Activated CD8-positive, alpha-beta memory T cell treated with anti-CD3 and anti-CD28 coated beads, Interleukin-2, amount 10 ng/mL, durations not matched to agents 7 days and 5 days (primary cell): ENCODE measurements at regions of chr4 and their contacts with region 1.

Region 1: GRCh38 chr4:26325191-26325590 is 4.4 kb downstream of the RBPJ start:
- DNase-seq: peak; percentile 53
- ATAC-seq: peak; percentile 32
- H3K4me3 Mint-ChIP-seq: peak overlapping the region; percentile 20
- H3K27ac Mint-ChIP-seq: peak overlapping the region; percentile 53
- H3K4me1 Mint-ChIP-seq: peaks cover 48% of the 10 kb centered on the region
- H3K27me3 Mint-ChIP-seq: no peaks in the 10 kb centered on the region

Region 2: DNA sequence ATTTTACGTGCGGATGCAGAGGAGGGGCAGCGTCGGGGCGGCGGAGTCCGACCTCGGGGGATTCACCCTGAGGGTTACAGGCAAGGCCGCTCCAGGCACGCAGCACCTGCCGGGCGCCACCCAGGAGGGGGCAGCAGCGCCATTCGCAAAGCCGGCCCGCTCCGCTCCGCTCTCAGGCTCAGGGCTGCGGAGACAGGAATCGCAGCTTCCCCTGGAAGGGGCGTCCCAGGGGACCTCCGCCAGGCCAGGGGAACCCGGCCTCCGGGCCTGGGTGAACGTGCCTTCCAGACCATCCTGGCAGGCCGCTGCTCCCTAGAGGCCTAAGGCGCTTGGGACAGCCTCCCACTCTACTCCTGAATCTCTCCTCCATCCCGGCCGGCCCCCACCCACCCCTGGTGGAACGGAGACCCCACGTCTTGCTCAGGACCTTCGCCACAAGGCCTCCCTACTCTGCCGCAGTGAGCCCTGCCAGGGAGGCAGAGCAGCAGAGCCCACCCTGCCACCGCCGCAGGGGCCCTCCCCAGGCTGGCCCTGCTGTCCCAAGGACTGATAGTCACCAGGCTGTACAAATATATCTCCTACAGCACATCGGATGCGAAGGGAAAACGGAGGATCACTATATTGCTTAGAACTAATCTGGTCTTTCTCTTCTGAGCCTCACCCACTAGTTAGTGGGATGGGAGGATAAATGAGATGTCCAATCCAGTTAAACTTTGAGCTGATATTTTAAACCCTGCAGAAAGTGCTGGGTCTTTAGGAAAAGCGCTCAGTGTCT is 296.2 kb before region 1 on chr4:
- CTCF ChIA-PET with region 1: interaction called, 20 read pairs
- DNase-seq: peak; percentile 79
- ATAC-seq: peak; percentile 97
- H3K4me3 Mint-ChIP-seq: no peak overlapping the region
- H3K27ac Mint-ChIP-seq: no peak overlapping the region
- H3K4me1 Mint-ChIP-seq: peaks cover 13% of the 10 kb centered on the region
- H3K27me3 Mint-ChIP-seq: peaks cover 2% of the 10 kb centered on the region

Region 3: DNA sequence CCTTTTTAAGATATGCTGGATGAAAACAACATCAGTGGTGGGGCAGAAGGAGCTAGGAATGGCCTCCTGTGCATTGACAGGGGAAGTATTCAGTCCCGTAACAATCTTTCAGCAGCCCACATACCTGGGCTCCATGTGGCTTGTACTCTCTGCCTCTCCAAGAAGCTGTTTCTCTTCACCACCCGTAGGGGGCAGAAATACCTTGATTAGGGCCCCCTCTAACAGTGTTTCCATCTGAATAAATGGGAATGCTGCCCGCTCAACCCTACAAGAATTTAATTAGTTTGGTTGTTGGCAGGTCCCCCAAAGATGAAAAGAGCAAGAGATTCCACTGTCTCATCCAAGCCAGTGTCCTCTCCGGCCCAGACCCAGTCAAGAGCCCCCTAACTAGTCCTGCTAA is 256.0 kb before region 1 on chr4:
- CTCF ChIA-PET with region 1: interaction called, 13 read pairs
- DNase-seq: no peak
- ATAC-seq: peak; percentile 54
- H3K4me3 Mint-ChIP-seq: no peak overlapping the region
- H3K27ac Mint-ChIP-seq: no peak overlapping the region
- H3K4me1 Mint-ChIP-seq: peaks cover 10% of the 10 kb centered on the region
- H3K27me3 Mint-ChIP-seq: peaks cover 7% of the 10 kb centered on the region

Region 4: GRCh38 chr4:26081795-26082498 is 243.2 kb before region 1 on chr4:
- CTCF ChIA-PET with region 1: interaction called, 11 read pairs
- DNase-seq: no peak
- ATAC-seq: peak; percentile 64
- H3K4me3 Mint-ChIP-seq: no peak overlapping the region
- H3K27ac Mint-ChIP-seq: peak overlapping the region; percentile 61
- H3K4me1 Mint-ChIP-seq: peaks cover 70% of the 10 kb centered on the region
- H3K27me3 Mint-ChIP-seq: no peaks in the 10 kb centered on the region

Region 5: GRCh38 chr4:26308568-26308967 is 16.6 kb before region 1 on chr4:
- CTCF ChIA-PET with region 1: interaction called, 13 read pairs
- DNase-seq: no peak
- ATAC-seq: peak; percentile 80
- H3K4me3 Mint-ChIP-seq: no peak overlapping the region
- H3K27ac Mint-ChIP-seq: peak overlapping the region; percentile 68
- H3K4me1 Mint-ChIP-seq: peaks cover 37% of the 10 kb centered on the region
- H3K27me3 Mint-ChIP-seq: no peaks in the 10 kb centered on the region

Region 6: DNA sequence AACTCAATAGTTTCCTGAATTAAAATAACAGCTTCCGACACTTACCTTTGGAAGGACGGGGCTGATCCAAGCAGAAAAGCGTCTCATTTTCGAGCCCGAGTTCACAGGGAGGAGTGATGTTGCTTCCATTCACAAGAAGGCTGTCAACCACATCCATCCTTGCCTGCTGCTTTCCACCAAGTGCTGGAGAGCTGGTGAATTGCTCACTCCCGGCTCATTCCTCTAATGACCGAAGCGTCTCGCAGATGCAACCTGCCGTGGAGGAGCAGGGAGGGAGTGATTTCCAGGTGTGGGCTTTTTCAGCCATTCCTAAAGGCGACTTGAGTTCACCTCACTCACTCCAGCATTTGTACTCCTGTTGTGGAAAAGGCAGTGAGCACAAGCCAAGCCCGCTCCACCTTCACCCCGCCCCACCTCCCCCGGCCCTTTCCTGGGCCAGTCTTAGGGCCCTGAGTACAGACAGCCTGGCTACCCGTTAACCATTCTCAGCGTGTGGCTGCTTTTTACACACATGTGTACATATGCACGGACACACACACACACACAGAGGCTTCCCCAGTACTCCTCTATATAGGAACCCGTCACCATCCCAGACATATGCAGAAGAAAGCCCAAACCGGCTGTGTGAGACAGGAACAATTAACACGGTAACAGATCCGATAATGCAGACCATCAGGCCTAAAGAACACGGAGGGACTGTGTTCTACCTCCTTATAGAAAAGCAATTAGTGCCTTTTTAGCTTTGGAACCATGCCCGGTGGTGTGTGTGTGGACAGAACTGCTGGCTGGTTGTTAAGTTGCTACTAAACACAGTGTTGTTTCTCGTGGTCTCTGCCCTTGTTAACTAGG is 165.1 kb after region 1 on chr4 and contains the start of gene CCKAR:
- CTCF ChIA-PET with region 1: no interaction called
- DNase-seq: no peak
- ATAC-seq: no peak
- H3K4me3 Mint-ChIP-seq: no peak within 1 kb of the TSS
- H3K27ac Mint-ChIP-seq: no peak within 1 kb of the TSS
- H3K4me1 Mint-ChIP-seq: no peaks in the 10 kb centered on the region
- H3K27me3 Mint-ChIP-seq: peaks cover 23% of the 10 kb centered on the region
- total RNA-seq, gene CCKAR: not detected